Heart left ventricle (tissue), 16 donors: ENCODE measurements at regions of chr12 and their contacts with region 1.

Region 1: GRCh38 chr12:6423267-6424007 is 21.3 kb upstream of the CD27 start:
- DNase-seq: peak; percentile 83 to 92 (median 87)
- ATAC-seq: peak; percentile 94 to 99 (median 98)
- H3K4me3 ChIP-seq: no peak overlapping the region
- H3K27ac ChIP-seq: peak overlapping the region in 1 of 12 donors; percentile 31
- H3K4me1 ChIP-seq: peaks cover 0 to 18% (median 5%) of the 10 kb centered on the region in 12 donors
- H3K27me3 ChIP-seq: no peaks in the 10 kb centered on the region
- CTCF ChIP-seq: peak; percentile 79 to 97 (median 92)
- POLR2A ChIP-seq: no peak

Region 2: GRCh38 chr12:6241495-6241894 is 181.9 kb before region 1 on chr12:
- intact Hi-C with region 1: no loop called
- DNase-seq: peak; percentile 75 to 86 (median 84)
- ATAC-seq: peak; percentile 46 to 83 (median 76)
- H3K4me3 ChIP-seq: no peak overlapping the region
- H3K27ac ChIP-seq: peak overlapping the region in 5 of 12 donors; percentile 13 to 34 (median 20)
- H3K4me1 ChIP-seq: peaks cover 0 to 15% (median 11%) of the 10 kb centered on the region in 12 donors
- H3K27me3 ChIP-seq: no peaks in the 10 kb centered on the region
- CTCF ChIP-seq: no peak
- POLR2A ChIP-seq: no peak

Region 3: GRCh38 chr12:6285063-6285477 is 138.4 kb before region 1 on chr12:
- intact Hi-C with region 1: no loop called
- DNase-seq: peak in 2 of 5 donors; percentile 69 to 74
- ATAC-seq: peak; percentile 65 to 87 (median 80)
- H3K4me3 ChIP-seq: no peak overlapping the region
- H3K27ac ChIP-seq: no peak overlapping the region
- H3K4me1 ChIP-seq: peaks cover 0 to 11% (median 5%) of the 10 kb centered on the region in 12 donors
- H3K27me3 ChIP-seq: no peaks in the 10 kb centered on the region
- CTCF ChIP-seq: peak; percentile 86 to 98 (median 92)
- POLR2A ChIP-seq: no peak

Region 4: GRCh38 chr12:6461401-6462233 is 38.2 kb after region 1 on chr12:
- intact Hi-C with region 1: loop called (anchors 1 to 5 kb)
- DNase-seq: peak; percentile 44 to 71 (median 48)
- ATAC-seq: peak in 3 of 4 donors; percentile 15 to 64 (median 23)
- H3K4me3 ChIP-seq: peak overlapping the region in 1 of 12 donors; percentile 29
- H3K27ac ChIP-seq: peak overlapping the region in 10 of 12 donors; percentile 24 to 84 (median 58)
- H3K4me1 ChIP-seq: peaks cover 0 to 72% (median 15%) of the 10 kb centered on the region in 12 donors
- H3K27me3 ChIP-seq: no peaks in the 10 kb centered on the region
- CTCF ChIP-seq: no peak
- POLR2A ChIP-seq: no peak

Region 5: GRCh38 chr12:6470375-6471163 is 47.1 kb after region 1 on chr12 and contains the start of gene VAMP1:
- intact Hi-C with region 1: loop called in 8 of 10 experiments (anchors 1 to 2 kb)
- DNase-seq: peak; percentile 98 to 99 (median 98)
- ATAC-seq: peak; percentile 97 to 99 (median 98)
- H3K4me3 ChIP-seq: peak within 1 kb of the TSS; percentile 44 to 86 (median 71)
- H3K27ac ChIP-seq: peak within 1 kb of the TSS; percentile 25 to 91 (median 84)
- H3K4me1 ChIP-seq: peaks cover 0 to 43% (median 19%) of the 10 kb centered on the region in 12 donors
- H3K27me3 ChIP-seq: no peaks in the 10 kb centered on the region
- CTCF ChIP-seq: peak in 1 of 12 donors; percentile 2
- POLR2A ChIP-seq: peak; percentile 97 to 100
- total RNA-seq, gene VAMP1: 2.1 to 8.3 (median 3.4) TPM

Region 6: DNA sequence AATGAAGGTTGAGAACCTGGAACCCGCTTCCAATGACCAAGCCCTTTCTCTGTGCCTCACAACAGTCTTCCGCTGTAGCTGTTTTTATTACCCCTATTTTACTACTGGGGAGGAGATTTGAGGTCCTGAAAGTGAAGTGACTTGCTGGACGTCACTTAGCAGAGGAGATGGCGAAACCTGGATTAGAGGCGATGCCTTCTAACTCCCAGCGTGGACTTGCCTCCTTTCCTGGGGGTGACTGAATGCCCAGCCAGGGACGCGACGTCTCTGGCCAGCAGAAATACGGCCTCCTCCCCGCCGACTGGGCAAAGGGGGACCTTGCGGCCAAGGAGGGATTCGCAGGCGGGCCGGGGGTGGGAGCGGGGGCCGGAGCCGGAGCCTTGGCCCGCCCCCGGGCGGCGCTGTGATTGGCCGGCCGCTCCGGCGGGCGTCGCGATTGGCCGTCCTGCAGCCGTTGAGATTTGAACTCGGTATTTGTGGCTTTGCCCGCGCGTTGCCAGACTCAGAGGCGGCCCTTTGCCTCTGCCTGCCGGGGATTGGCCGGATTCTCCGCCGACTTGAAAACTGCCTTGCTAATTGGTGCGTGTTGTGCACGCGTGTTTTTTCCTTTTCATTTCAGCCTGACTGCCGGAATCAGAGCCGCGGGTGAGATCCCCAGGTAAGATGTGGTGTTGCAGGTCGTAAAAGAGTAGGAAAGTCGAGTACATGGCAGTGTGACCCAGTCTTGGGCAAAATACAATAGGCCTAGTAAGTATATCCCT is 70.2 kb after region 1 on chr12 and contains the start of gene NCAPD2:
- intact Hi-C with region 1: loop called in 1 of 10 experiments (anchors 2 kb)
- DNase-seq: peak; percentile 93 to 97 (median 96)
- ATAC-seq: peak; percentile 92 to 96 (median 96)
- H3K4me3 ChIP-seq: peak within 1 kb of the TSS; percentile 42 to 94 (median 86)
- H3K27ac ChIP-seq: peak within 1 kb of the TSS; percentile 86 to 99 (median 98)
- H3K4me1 ChIP-seq: peaks cover 0 to 30% (median 20%) of the 10 kb centered on the region in 12 donors
- H3K27me3 ChIP-seq: no peaks in the 10 kb centered on the region
- CTCF ChIP-seq: peak in 10 of 12 donors; percentile 8 to 49 (median 30)
- POLR2A ChIP-seq: peak in 1 of 2 donors; percentile 64
- total RNA-seq, gene NCAPD2: 8.4 to 22.4 (median 11.3) TPM

Region 7: GRCh38 chr12:6533923-6534694 is 110.7 kb after region 1 on chr12 and contains the start of gene GAPDH:
- intact Hi-C with region 1: loop called (anchors 1 to 10 kb)
- DNase-seq: peak; percentile 95 to 97 (median 95)
- ATAC-seq: peak; percentile 74 to 83 (median 78)
- H3K4me3 ChIP-seq: peak within 1 kb of the TSS; percentile 64 to 100 (median 90)
- H3K27ac ChIP-seq: peak within 1 kb of the TSS; percentile 90 to 100 (median 96)
- H3K4me1 ChIP-seq: peaks cover 0 to 57% (median 45%) of the 10 kb centered on the region in 12 donors
- H3K27me3 ChIP-seq: no peaks in the 10 kb centered on the region
- CTCF ChIP-seq: no peak
- POLR2A ChIP-seq: peak in 1 of 2 donors; percentile 94
- total RNA-seq, gene GAPDH: 3,379 to 7,430 (median 4,887) TPM

Region 8: GRCh38 chr12:6554168-6555017 is 131.0 kb after region 1 on chr12:
- intact Hi-C with region 1: loop called in 4 of 10 experiments (anchors 5 kb)
- DNase-seq: peak; percentile 79 to 89 (median 86)
- ATAC-seq: peak; percentile 24 to 51 (median 39)
- H3K4me3 ChIP-seq: peak overlapping the region; percentile 87 to 98 (median 93)
- H3K27ac ChIP-seq: peak overlapping the region; percentile 31 to 96 (median 90)
- H3K4me1 ChIP-seq: peaks cover 6 to 75% (median 62%) of the 10 kb centered on the region in 12 donors
- H3K27me3 ChIP-seq: no peaks in the 10 kb centered on the region
- CTCF ChIP-seq: peak; percentile 37 to 77 (median 64)
- POLR2A ChIP-seq: no peak